Activated naive CD4-positive, alpha-beta T cell treated with anti-CD3 and anti-CD28 coated beads for 36 hours (primary cell): ENCODE measurements at regions of chr3 and their contacts with region 1.

Region 1: GRCh38 chr3:72938471-72939265 is 50.8 kb downstream of the GXYLT2 start:
- DNase-seq: peak; percentile 26
- H3K4me3 Mint-ChIP-seq: no peak overlapping the region
- H3K27ac Mint-ChIP-seq: no peak overlapping the region
- H3K4me1 Mint-ChIP-seq: no peaks in the 10 kb centered on the region
- H3K27me3 Mint-ChIP-seq: no peaks in the 10 kb centered on the region

Region 2: DNA sequence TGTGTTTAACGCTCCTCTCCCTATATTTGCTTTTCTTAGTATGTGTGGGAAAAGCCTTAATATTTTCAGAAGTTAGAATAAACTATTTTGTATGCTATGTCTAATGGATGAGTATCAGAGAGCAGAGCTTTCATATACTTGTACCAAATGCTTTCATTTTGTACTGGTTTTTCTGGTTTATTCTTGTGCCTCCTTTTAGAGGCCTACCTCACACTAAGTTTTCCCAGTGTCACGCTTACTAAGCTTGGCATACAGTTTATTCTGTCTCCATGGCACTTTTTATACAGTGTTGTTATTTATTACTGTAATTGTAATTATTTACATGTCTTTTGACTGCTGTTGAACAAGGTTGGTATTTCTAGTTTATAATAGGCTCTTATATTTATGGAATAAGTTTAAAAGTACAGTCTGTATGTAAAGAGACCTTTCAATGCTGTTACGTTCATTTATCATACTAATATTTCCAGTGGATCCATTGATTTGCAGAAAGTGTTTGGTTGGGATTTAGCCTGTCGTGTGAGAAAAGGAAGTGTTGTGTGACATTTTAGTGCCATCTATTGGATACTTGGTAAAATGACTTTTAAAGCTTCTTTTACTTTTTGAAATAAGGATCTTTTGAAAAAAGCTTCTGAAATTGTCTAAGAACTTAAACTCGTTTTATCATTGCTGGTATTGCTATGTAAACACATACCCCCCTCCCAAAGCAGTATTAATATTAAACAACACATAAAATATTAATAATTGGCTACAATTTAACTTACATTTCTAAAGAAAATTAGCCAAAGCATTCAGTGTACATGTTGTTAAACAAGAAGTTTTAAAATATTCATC is 117.6 kb after region 1 on chr3:
- CTCF ChIA-PET with region 1: interaction called, 54 read pairs
- intact Hi-C with region 1: loop called (anchors 1 kb)
- DNase-seq: no peak
- H3K4me3 Mint-ChIP-seq: no peak overlapping the region
- H3K27ac Mint-ChIP-seq: no peak overlapping the region
- H3K4me1 Mint-ChIP-seq: peaks cover 17% of the 10 kb centered on the region
- H3K27me3 Mint-ChIP-seq: no peaks in the 10 kb centered on the region

Region 3: GRCh38 chr3:73121669-73122331 is 183.1 kb after region 1 on chr3:
- CTCF ChIA-PET with region 1: no interaction called
- intact Hi-C with region 1: no loop called
- DNase-seq: no peak
- H3K4me3 Mint-ChIP-seq: no peak overlapping the region
- H3K27ac Mint-ChIP-seq: no peak overlapping the region
- H3K4me1 Mint-ChIP-seq: peaks cover 6% of the 10 kb centered on the region
- H3K27me3 Mint-ChIP-seq: no peaks in the 10 kb centered on the region

Region 4: GRCh38 chr3:73270839-73271483 is 332.3 kb after region 1 on chr3:
- CTCF ChIA-PET with region 1: no interaction called
- intact Hi-C with region 1: no loop called
- DNase-seq: no peak
- H3K4me3 Mint-ChIP-seq: no peak overlapping the region
- H3K27ac Mint-ChIP-seq: no peak overlapping the region
- H3K4me1 Mint-ChIP-seq: no peaks in the 10 kb centered on the region
- H3K27me3 Mint-ChIP-seq: no peaks in the 10 kb centered on the region

Region 5: DNA sequence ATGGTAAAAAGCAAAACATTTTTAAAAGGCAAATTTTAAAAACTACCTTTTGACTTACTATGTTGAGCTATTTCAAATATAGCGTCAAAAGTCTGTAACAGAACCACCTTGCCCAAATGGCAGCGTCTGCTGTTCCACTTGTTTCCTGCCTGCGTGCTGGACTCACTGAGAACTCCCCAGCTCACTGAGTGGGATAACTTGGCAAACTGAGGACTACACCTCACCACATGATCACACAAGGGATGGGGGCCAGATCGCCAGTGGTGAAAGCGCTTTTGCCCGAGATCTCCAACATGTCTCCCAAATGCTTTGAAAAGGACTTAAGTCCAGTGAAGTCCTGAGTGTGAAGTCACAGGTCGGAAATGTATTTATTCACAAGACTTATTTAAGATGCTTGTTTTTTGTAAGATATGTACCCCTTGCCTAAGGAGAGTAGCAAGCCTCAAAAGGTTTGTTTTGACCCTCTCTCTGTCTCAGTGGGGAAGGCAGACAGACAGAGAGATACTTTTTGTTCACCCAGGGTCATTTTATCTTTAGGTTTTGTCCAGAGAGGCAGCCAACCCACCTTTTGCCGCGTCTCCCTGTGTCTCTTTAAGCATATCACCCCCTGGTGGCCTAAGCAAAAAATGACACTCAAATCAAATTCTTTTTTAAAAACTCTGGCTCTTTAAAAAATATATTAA is 493.5 kb after region 1 on chr3:
- CTCF ChIA-PET with region 1: no interaction called
- intact Hi-C with region 1: loop called (anchors 5 kb)
- DNase-seq: peak; percentile 16
- H3K4me3 Mint-ChIP-seq: no peak overlapping the region
- H3K27ac Mint-ChIP-seq: no peak overlapping the region
- H3K4me1 Mint-ChIP-seq: no peaks in the 10 kb centered on the region
- H3K27me3 Mint-ChIP-seq: peaks cover 11% of the 10 kb centered on the region